ENCODE measurements at regions of chr7 and their contacts with region 1.

Region 1: DNA sequence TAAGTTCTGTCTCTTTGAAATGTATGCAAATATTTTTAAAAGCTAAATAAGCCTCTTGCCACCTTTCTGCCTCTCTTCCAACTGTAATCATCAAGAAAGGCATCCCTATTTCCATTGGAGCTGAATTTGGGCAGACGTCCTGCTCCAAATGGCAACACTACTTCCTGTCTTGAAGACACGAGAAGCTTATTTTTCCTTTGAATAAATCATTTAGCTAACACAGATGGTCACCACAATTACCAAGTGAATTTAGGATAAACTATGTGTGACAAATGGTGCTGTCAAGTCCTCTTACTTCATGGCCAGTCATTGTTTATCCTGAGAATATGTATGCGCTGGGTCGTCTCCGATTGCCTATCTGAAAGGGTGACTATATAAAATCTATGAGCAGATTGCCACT is 268.0 kb downstream of the ANKRD7 start:
- DNase-seq: no peak
- ATAC-seq: no peak
- H3K4me3 ChIP-seq: no peak overlapping the region
- H3K27ac ChIP-seq: no peak overlapping the region
- H3K4me1 ChIP-seq: no peaks in the 10 kb centered on the region
- H3K27me3 ChIP-seq: no peaks in the 10 kb centered on the region
- CTCF ChIP-seq: no peak

Region 2: DNA sequence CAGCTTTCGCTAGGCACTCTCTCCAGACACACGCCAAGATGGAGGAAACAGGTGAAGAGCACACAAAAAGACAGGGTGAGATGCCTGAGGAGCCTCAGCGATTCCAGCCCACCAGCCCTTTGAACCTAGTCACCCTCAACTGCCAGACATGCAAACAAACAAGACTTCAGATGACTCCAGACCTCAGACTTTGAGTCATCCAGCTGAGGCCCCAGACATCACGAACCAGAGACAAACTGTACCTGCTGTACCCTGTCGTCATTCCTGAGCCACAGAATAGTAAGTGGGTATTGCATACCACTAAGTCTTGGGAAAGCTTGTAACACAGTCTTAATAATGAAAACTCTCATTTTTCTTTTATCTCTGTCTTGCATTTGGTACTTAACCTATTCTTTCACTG is 435.1 kb before region 1 on chr7:
- CTCF ChIA-PET with region 1: interaction called, 10 read pairs
- POLR2A ChIA-PET with region 1: no interaction called
- in situ Hi-C with region 1: no loop called
- intact Hi-C with region 1: no loop called
- DNase-seq: no peak
- ATAC-seq: no peak
- H3K4me3 ChIP-seq: no peak overlapping the region
- H3K27ac ChIP-seq: no peak overlapping the region
- H3K4me1 ChIP-seq: no peaks in the 10 kb centered on the region
- H3K27me3 ChIP-seq: no peaks in the 10 kb centered on the region
- CTCF ChIP-seq: no peak

Region 3: GRCh38 chr7:118352854-118353453 is 139.5 kb before region 1 on chr7:
- CTCF ChIA-PET with region 1: no interaction called
- POLR2A ChIA-PET with region 1: no interaction called
- in situ Hi-C with region 1: no loop called
- intact Hi-C with region 1: no loop called
- DNase-seq: peak; percentile 5
- ATAC-seq: no peak; the same call in 1 of the 2 replicates
- H3K4me3 ChIP-seq: no peak overlapping the region
- H3K27ac ChIP-seq: no peak overlapping the region
- H3K4me1 ChIP-seq: no peaks in the 10 kb centered on the region
- H3K27me3 ChIP-seq: no peaks in the 10 kb centered on the region
- CTCF ChIP-seq: peak; percentile 19; the same call in 1 of the 2 replicates

Region 4: DNA sequence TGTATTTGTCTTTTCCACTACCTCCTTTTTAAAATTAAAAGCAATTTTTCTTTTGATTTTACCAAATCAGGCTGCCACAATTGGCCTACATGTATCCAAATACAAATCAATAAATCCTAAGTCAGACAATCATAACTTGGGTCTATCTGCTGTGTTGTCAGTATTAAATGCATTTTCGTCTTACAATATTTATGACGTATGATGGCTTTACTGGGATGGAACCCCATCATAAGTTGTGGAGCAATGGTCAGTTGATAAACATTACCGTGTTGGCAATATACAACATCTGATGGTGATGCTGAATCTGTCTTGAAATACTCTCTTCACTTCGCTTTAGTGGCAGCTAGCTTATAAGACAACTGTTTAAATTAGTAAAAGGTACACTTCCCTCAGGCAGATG is 288.9 kb after region 1 on chr7:
- CTCF ChIA-PET with region 1: no interaction called
- POLR2A ChIA-PET with region 1: no interaction called
- in situ Hi-C with region 1: no loop called
- intact Hi-C with region 1: no loop called
- DNase-seq: no peak
- ATAC-seq: no peak
- H3K4me3 ChIP-seq: no peak overlapping the region
- H3K27ac ChIP-seq: no peak overlapping the region
- H3K4me1 ChIP-seq: no peaks in the 10 kb centered on the region
- H3K27me3 ChIP-seq: no peaks in the 10 kb centered on the region
- CTCF ChIP-seq: no peak